Gastrocnemius medialis (tissue), 4 donors: ENCODE measurements at regions of chr11 and their contacts with region 1.

Region 1: DNA sequence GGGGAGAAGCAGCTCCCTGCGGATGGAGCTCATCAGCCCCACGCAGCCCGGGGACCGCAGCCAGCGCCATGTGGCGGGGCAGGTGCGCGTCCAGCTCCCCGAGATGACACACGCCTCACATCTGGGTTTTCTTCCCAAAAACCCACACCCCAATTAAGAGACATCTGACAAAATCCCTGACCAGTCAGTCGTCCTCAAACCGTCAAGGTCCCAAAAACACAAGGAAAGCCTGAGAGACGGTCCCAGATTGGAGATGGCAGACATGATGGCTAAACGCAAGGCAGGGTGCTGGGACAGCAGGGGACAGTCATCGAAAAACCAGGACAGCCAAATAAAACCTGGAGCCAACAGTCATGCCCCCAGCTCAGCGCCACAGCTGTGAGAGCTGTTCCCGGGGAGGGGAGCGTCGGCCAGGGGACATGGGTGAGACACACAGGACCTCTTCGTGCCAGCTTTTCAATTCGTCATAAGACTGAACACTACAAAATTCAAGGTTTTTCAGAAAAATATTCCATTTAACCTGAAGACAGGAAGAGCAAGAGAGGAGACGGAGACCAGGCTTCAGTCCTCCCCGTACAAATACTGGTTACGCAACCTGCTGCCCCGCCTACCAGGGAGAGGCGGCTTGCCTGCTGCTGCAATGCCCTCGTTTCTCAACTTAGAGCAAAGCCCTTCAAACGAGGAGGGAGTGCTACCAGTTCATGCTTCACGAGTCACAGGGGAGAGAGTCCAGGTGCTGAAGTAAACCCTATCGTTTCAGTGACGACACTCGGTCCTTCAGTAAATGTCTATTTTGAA is 10.5 kb downstream of the TOLLIP start:
- DNase-seq: peak; percentile 92 to 96
- ATAC-seq: peak; percentile 81 to 85
- H3K4me3 ChIP-seq: peak overlapping the region; percentile 28 to 35 (median 32)
- H3K27ac ChIP-seq: peak overlapping the region; percentile 89 to 94 (median 92)
- H3K4me1 ChIP-seq: peaks cover 36 to 39% of the 10 kb centered on the region in 2 donors
- H3K27me3 ChIP-seq: no peaks in the 10 kb centered on the region
- CTCF ChIP-seq: no peak
- POLR2A ChIP-seq: peak; percentile 76 to 78

Region 2: GRCh38 chr11:910589-911195 is 388.2 kb before region 1 on chr11 and contains the start of gene CHID1:
- in situ Hi-C with region 1: no loop called
- intact Hi-C with region 1: no loop called
- DNase-seq: peak; percentile 73 to 84
- ATAC-seq: peak; percentile 93 to 94
- H3K4me3 ChIP-seq: peak within 1 kb of the TSS; percentile 82 to 98 (median 88)
- H3K27ac ChIP-seq: peak within 1 kb of the TSS; percentile 81 to 97 (median 91)
- H3K4me1 ChIP-seq: peaks cover 11 to 14% of the 10 kb centered on the region in 2 donors
- H3K27me3 ChIP-seq: no peaks in the 10 kb centered on the region
- CTCF ChIP-seq: peak in 2 of 5 experiments; percentile 20
- POLR2A ChIP-seq: peak; percentile 63
- total RNA-seq, gene CHID1: 23.3 to 43.2 (median 33.1) TPM

Region 3: DNA sequence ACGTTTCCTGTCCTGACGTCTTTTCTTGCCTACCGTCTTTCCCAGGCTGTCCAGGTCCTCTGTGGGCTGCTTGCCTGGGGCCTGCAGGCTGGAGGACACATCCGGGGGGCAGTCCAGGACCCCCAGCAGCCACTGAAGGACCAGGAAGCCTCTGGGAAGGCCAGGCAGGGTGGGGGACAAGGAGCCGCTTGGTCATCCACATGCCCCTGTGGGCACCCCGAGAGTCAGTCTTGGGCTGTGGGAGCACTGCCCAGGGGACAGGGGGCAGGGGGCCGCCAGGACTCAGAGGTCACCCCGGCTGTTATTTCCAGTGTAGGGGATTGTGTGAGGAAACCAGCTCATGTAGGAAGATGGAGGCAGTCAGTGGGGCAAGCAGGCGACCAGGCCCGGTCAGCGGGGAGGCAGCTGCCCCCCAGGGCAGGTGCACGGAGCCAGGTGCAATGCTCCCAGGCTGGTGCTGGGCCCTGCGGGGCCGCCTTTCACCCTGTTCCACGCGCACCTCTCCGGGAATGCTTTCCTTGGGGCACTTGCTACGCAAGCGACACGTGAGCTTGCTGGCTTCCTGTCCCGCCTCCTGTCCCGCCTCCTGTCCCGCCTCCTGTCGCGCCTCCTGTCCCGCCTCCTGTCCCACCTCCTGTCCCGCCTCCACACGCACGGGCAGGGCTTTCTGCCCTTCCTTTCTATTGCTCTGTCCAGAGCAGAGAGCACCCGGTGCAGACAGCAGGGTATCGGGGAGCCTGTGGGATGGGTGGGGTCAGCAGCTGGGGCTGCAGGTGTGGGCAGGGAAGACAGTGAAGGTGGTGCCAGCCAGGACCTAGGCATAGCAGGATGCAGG is 36.5 kb before region 1 on chr11:
- in situ Hi-C with region 1: no loop called
- intact Hi-C with region 1: loop called (anchors 5 kb)
- DNase-seq: peak; percentile 86 to 91
- ATAC-seq: peak; percentile 84 to 94
- H3K4me3 ChIP-seq: peak overlapping the region; percentile 58 to 69 (median 64)
- H3K27ac ChIP-seq: peak overlapping the region; percentile 79 to 87 (median 83)
- H3K4me1 ChIP-seq: peaks cover 4 to 18% of the 10 kb centered on the region in 2 donors
- H3K27me3 ChIP-seq: no peaks in the 10 kb centered on the region
- CTCF ChIP-seq: no peak
- POLR2A ChIP-seq: peak; percentile 50 to 52

Region 4: DNA sequence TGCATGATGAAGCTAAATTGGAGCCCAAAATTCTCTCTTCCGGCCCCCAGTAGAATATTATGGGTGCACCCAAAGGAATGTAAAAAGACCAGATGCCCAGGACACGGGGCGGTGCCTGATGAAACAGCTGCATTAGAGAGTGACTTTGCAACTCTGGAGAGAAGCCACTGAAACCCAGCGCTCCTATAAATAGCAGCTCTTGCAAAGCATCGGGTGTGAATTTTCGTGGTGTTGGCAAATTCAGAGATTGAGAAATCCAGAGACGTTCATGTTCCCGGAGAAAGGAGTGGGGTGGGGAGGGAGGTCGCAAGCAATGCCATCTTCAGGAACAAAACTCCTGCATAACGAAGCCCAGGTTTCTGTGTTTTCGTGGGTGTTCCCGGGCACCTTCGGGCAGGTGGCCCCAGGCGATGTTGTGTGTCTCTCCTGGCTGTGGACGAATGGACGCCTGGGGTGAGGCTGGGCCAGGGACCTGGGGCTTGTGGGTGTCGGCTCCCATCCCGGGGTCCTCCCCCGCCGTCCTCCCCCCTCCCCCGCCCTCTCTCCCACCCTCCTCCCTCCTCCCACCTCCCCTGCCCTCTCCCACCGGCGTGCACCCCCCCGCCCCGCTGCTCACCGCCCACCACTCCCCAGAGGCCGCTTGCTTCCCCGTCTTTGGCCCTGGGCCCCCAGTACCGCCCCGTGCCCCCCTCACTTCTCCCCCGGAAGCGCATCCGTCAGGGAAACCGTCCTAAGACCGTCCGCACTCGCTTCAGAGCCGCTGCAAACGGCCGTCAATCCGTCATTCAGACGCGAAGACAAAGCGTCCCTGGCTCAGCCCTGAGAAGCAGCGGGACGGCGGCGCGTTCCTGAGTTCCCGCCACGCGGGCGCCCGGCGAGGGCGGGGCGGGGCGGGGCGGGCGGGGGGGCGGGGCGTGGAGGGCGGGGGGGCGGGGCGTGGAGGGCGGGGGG is 37.2 kb after region 1 on chr11:
- in situ Hi-C with region 1: no loop called
- intact Hi-C with region 1: loop called (anchors 1 kb)
- DNase-seq: peak; percentile 91 to 96
- ATAC-seq: peak; percentile 95
- H3K4me3 ChIP-seq: peak overlapping the region; percentile 53 to 86 (median 61)
- H3K27ac ChIP-seq: peak overlapping the region; percentile 89 to 98 (median 94)
- H3K4me1 ChIP-seq: peaks cover 11 to 12% of the 10 kb centered on the region in 2 donors
- H3K27me3 ChIP-seq: peaks cover 0 to 2% (median 0%) of the 10 kb centered on the region in 3 donors
- CTCF ChIP-seq: no peak
- POLR2A ChIP-seq: peak; percentile 70 to 76

Region 5: DNA sequence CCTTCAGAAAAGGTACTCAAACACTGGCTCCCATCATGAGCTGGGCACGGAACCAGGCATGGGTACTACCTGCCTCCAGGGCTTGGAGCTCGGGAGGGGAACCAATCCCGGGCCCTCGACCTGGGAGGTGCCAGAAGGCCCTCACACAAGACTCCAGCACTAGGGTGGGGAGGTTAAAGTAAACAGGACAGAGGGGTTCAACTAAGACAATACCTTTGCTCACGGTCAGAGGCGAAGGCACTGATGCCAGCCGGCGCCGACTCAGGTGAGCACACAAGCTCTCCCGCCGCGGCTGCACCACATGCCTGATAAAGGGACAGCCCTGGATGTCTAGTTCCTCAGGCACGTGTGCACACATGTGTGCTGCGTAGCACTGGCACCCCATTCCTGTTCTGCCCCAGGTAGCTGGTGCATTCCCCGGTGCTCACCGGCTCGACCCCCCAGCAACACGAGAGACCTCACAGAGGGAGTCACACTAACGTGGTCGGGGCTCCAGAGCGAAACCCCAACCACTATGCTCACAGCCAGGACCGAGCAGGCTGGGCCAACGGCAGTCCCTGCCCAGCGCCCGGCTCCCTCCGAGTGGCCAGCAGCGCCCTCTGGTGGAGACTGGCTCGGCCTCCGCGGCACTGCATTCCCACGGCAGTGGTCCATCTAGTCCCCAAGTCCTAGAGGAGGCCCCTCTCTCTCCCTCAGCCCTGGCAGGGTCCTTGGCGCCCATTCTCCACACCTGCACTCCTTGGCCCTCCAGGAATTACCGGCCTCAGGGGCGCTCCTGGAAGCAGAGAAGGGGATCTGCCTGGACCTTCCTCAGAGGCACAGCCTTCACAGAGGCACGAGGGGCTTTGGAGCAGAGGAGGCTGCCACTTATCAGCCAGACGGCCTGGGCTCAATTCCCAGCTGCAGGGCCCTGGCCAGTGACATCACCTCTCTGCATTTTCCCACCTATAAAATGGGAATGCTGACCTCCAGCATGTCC is 216.5 kb after region 1 on chr11:
- in situ Hi-C with region 1: loop called in 1 of 4 experiments (anchors 25 kb)
- intact Hi-C with region 1: loop called (anchors 10 kb)
- DNase-seq: peak; percentile 48 to 64
- ATAC-seq: peak; percentile 85 to 88
- H3K4me3 ChIP-seq: peak overlapping the region in 2 of 4 donors; percentile 20 to 30
- H3K27ac ChIP-seq: peak overlapping the region in 1 of 4 donors; percentile 45
- H3K4me1 ChIP-seq: peaks cover 38 to 50% of the 10 kb centered on the region in 2 donors
- H3K27me3 ChIP-seq: no peaks in the 10 kb centered on the region
- CTCF ChIP-seq: peak; percentile 85 to 97 (median 95)
- POLR2A ChIP-seq: no peak

Region 6: DNA sequence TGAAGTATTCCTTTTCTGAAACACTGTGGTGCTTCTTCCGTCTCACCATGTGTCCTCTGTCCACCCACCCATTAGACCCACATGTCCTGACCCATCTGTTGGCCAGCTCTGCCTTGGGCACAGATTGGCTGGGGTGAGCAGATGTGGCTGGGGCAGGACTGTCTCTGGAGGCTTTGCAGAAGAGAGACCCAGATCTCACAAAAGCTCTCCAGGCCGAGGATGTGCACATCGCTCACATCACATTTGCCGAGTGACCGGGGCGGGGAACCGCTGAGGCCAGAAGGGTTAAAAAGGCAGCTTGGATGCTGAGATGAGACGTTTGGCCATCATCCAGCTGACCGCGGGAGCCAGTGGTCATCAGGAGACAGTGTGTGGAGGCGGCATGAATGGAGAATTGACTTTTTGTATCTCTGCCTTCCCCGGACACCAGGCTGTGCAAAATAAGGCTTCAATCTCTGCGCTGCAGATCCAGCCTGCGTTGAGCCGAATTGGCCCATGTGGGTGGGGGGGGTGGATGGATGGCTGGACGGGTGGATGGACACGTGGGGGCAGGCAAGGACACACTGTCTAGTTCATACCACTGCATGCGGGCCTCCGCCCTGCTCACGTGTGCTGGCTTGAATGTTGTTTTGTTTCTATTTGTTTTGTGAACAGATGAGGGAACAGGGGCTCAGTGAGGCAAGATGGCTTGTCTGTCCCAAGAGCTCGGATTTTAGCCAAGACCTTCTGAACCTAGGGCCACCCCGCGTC is 445.4 kb after region 1 on chr11:
- in situ Hi-C with region 1: no loop called
- intact Hi-C with region 1: loop called (anchors 5 kb)
- DNase-seq: peak; percentile 83 to 85
- ATAC-seq: peak; percentile 37 to 65
- H3K4me3 ChIP-seq: no peak overlapping the region
- H3K27ac ChIP-seq: peak overlapping the region; percentile 59 to 81 (median 72)
- H3K4me1 ChIP-seq: peaks cover 29 to 40% of the 10 kb centered on the region in 2 donors
- H3K27me3 ChIP-seq: no peaks in the 10 kb centered on the region
- CTCF ChIP-seq: no peak
- POLR2A ChIP-seq: no peak